ENCODE measurements at regions of chr3 and their contacts with region 1.

Region 1: DNA sequence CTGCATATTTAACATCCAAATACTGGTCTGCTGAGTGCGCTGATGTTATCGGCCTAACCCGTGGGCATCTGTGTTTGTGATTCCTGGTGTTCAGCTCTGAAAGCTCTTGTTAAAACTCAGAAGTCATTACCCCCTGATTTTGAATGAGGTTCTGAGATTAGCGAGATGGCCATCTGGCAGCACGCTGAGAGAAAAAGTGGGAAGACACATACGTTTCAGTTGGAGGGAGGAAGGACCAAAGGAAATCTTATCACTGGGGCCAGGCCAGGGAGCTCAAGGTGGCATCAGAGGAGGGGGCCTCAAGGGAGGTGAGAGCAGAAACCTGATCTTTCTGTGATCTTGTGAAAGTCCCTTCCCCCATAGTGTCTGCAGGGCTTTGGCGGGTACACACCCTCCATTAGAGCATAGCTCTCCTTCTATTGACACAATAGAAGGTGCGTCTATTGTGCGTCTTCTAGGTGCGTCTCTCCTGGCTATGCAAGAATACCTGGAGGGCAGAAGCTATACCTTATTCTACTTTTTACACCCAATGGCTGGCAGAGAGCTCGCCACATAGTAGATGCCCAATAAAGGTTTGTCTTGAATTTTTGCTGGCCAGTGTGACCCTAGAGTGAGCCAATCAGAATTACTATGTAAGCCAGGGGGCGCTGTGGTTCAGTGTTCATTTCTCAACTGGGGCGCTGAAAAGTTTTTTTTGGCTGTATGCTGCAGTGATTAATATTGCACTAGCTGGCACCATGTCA is 182.4 kb downstream of the SHQ1 start:
- DNase-seq: peak; percentile 34 to 76 (median 53)
- ATAC-seq: peak; percentile 51
- H3K4me3 ChIP-seq: no peak overlapping the region
- H3K4me3 Mint-ChIP-seq: no peak overlapping the region
- H3K27ac ChIP-seq: no peak overlapping the region
- H3K27ac Mint-ChIP-seq: no peak overlapping the region
- H3K4me1 ChIP-seq: no peaks in the 10 kb centered on the region
- H3K4me1 Mint-ChIP-seq: no peaks in the 10 kb centered on the region
- H3K27me3 ChIP-seq: peaks cover 0 to 3% of the 10 kb centered on the region in 2 experiments
- H3K27me3 Mint-ChIP-seq: no peaks in the 10 kb centered on the region
- CTCF ChIP-seq: peak; percentile 82

Region 2: GRCh38 chr3:71725279-71725991 is 940.4 kb before region 1 on chr3 and contains the start of gene EIF4E3:
- CTCF ChIA-PET with region 1: no interaction called
- POLR2A ChIA-PET with region 1: no interaction called
- intact Hi-C with region 1: loop called in 1 of 2 experiments (anchors 5 kb)
- DNase-seq: peak in 8 of 14 experiments; percentile 19 to 81 (median 53)
- ATAC-seq: peak; percentile 21
- H3K4me3 ChIP-seq: peak within 1 kb of the TSS; percentile 90
- H3K4me3 Mint-ChIP-seq: peak within 1 kb of the TSS; percentile 89
- H3K27ac ChIP-seq: peak within 1 kb of the TSS; percentile 63 to 84
- H3K27ac Mint-ChIP-seq: peak within 1 kb of the TSS; percentile 91
- H3K4me1 ChIP-seq: peaks cover 62% of the 10 kb centered on the region
- H3K4me1 Mint-ChIP-seq: peaks cover 77% of the 10 kb centered on the region
- H3K27me3 ChIP-seq: no peaks in the 10 kb centered on the region
- H3K27me3 Mint-ChIP-seq: no peaks in the 10 kb centered on the region
- CTCF ChIP-seq: no peak
- total RNA-seq, gene EIF4E3: 48.2 to 50.4 TPM

Region 3: GRCh38 chr3:71875461-71875947 is 790.4 kb before region 1 on chr3:
- CTCF ChIA-PET with region 1: no interaction called
- POLR2A ChIA-PET with region 1: no interaction called
- intact Hi-C with region 1: loop called (anchors 1 to 2 kb)
- DNase-seq: peak; percentile 63 to 84 (median 74)
- ATAC-seq: peak; percentile 99
- H3K4me3 ChIP-seq: no peak overlapping the region
- H3K4me3 Mint-ChIP-seq: no peak overlapping the region
- H3K27ac ChIP-seq: no peak overlapping the region
- H3K27ac Mint-ChIP-seq: no peak overlapping the region
- H3K4me1 ChIP-seq: peaks cover 12% of the 10 kb centered on the region
- H3K4me1 Mint-ChIP-seq: peaks cover 21% of the 10 kb centered on the region
- H3K27me3 ChIP-seq: no peaks in the 10 kb centered on the region
- H3K27me3 Mint-ChIP-seq: no peaks in the 10 kb centered on the region
- CTCF ChIP-seq: peak; percentile 78

Region 4: GRCh38 chr3:71926262-71926600 is 739.6 kb before region 1 on chr3:
- CTCF ChIA-PET with region 1: interaction called, 3 read pairs
- POLR2A ChIA-PET with region 1: no interaction called
- intact Hi-C with region 1: loop called in 1 of 2 experiments (anchors 5 kb)
- DNase-seq: peak in 4 of 14 experiments; percentile 5 to 45 (median 30)
- ATAC-seq: no peak
- H3K4me3 ChIP-seq: no peak overlapping the region
- H3K4me3 Mint-ChIP-seq: no peak overlapping the region
- H3K27ac ChIP-seq: no peak overlapping the region
- H3K27ac Mint-ChIP-seq: no peak overlapping the region
- H3K4me1 ChIP-seq: no peaks in the 10 kb centered on the region
- H3K4me1 Mint-ChIP-seq: no peaks in the 10 kb centered on the region
- H3K27me3 ChIP-seq: no peaks in the 10 kb centered on the region
- H3K27me3 Mint-ChIP-seq: no peaks in the 10 kb centered on the region
- CTCF ChIP-seq: peak; percentile 25

Region 5: GRCh38 chr3:72738752-72739530 is 73.1 kb after region 1 on chr3:
- CTCF ChIA-PET with region 1: no interaction called
- POLR2A ChIA-PET with region 1: interaction called, 10 read pairs
- intact Hi-C with region 1: no loop called
- DNase-seq: peak; percentile 63 to 87 (median 74)
- ATAC-seq: peak; percentile 89
- H3K4me3 ChIP-seq: peak overlapping the region; percentile 76
- H3K4me3 Mint-ChIP-seq: peak overlapping the region; percentile 95
- H3K27ac ChIP-seq: peak overlapping the region; percentile 54
- H3K27ac Mint-ChIP-seq: peak overlapping the region; percentile 99
- H3K4me1 ChIP-seq: peaks cover 25% of the 10 kb centered on the region
- H3K4me1 Mint-ChIP-seq: peaks cover 36% of the 10 kb centered on the region
- H3K27me3 ChIP-seq: no peaks in the 10 kb centered on the region
- H3K27me3 Mint-ChIP-seq: no peaks in the 10 kb centered on the region
- CTCF ChIP-seq: no peak

Region 6: DNA sequence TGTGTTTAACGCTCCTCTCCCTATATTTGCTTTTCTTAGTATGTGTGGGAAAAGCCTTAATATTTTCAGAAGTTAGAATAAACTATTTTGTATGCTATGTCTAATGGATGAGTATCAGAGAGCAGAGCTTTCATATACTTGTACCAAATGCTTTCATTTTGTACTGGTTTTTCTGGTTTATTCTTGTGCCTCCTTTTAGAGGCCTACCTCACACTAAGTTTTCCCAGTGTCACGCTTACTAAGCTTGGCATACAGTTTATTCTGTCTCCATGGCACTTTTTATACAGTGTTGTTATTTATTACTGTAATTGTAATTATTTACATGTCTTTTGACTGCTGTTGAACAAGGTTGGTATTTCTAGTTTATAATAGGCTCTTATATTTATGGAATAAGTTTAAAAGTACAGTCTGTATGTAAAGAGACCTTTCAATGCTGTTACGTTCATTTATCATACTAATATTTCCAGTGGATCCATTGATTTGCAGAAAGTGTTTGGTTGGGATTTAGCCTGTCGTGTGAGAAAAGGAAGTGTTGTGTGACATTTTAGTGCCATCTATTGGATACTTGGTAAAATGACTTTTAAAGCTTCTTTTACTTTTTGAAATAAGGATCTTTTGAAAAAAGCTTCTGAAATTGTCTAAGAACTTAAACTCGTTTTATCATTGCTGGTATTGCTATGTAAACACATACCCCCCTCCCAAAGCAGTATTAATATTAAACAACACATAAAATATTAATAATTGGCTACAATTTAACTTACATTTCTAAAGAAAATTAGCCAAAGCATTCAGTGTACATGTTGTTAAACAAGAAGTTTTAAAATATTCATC is 390.4 kb after region 1 on chr3:
- CTCF ChIA-PET with region 1: interaction called, 4 read pairs
- POLR2A ChIA-PET with region 1: no interaction called
- intact Hi-C with region 1: loop called in 1 of 2 experiments (anchors 10 kb)
- DNase-seq: peak in 3 of 14 experiments; percentile 40 to 68 (median 44)
- ATAC-seq: peak; percentile 48
- H3K4me3 ChIP-seq: no peak overlapping the region
- H3K4me3 Mint-ChIP-seq: no peak overlapping the region
- H3K27ac ChIP-seq: no peak overlapping the region
- H3K27ac Mint-ChIP-seq: peak overlapping the region; percentile 18
- H3K4me1 ChIP-seq: no peaks in the 10 kb centered on the region
- H3K4me1 Mint-ChIP-seq: peaks cover 28% of the 10 kb centered on the region
- H3K27me3 ChIP-seq: no peaks in the 10 kb centered on the region
- H3K27me3 Mint-ChIP-seq: no peaks in the 10 kb centered on the region
- CTCF ChIP-seq: peak; percentile 79

Region 7: DNA sequence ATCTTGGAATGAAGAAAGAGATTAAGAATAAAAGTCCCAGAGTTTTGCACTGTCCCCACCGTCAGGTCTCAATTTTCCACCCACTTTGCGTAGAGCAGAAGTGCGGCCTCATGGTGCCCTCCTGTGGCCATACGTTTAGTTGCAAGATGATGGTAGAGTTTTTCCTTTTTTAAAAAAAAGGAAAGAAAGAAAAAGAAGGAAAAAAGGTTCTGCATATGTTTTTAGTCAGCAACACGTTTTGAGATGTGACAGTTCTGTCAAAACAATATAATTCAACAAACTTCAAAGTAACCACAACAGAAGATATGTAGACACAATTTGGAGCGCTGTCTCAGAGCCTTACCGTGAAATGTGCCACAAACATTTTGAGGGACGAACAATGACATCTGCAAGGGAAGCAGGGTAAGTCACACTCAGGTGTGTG is 420.2 kb after region 1 on chr3:
- CTCF ChIA-PET with region 1: no interaction called
- POLR2A ChIA-PET with region 1: no interaction called
- intact Hi-C with region 1: loop called (anchors 1 to 5 kb)
- DNase-seq: peak; percentile 20 to 73 (median 37)
- ATAC-seq: peak; percentile 78
- H3K4me3 ChIP-seq: no peak overlapping the region
- H3K4me3 Mint-ChIP-seq: peak overlapping the region; percentile 22
- H3K27ac ChIP-seq: no peak overlapping the region
- H3K27ac Mint-ChIP-seq: no peak overlapping the region
- H3K4me1 ChIP-seq: peaks cover 4% of the 10 kb centered on the region
- H3K4me1 Mint-ChIP-seq: peaks cover 7% of the 10 kb centered on the region
- H3K27me3 ChIP-seq: no peaks in the 10 kb centered on the region
- H3K27me3 Mint-ChIP-seq: no peaks in the 10 kb centered on the region
- CTCF ChIP-seq: peak; percentile 95